ENCODE measurements at regions of chr9 and their contacts with region 1.

Region 1: DNA sequence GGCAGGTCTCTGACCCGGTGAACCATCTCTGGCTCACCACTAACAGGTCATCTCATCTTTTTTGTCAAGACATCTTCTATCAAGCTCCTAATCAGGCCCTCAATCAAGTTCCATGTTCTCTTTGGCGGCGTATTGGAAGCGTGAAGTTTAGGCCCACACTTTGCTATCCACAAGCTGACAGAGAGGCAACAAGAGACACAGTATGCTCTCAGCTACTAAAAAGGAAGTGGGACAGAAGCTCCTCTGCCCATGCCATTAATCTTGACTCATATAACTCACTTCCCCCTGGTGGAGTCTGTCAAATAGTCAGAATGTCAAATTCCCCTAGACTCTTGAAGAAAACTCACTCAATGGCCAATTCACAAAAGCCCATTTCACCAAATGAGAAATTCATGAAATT is 77.6 kb upstream of the TMC1 start:
- H3K4me3 Mint-ChIP-seq: no peak overlapping the region
- H3K27ac Mint-ChIP-seq: peak overlapping the region; percentile 61
- H3K4me1 Mint-ChIP-seq: peaks cover 69% of the 10 kb centered on the region
- H3K27me3 Mint-ChIP-seq: no peaks in the 10 kb centered on the region

Region 2: DNA sequence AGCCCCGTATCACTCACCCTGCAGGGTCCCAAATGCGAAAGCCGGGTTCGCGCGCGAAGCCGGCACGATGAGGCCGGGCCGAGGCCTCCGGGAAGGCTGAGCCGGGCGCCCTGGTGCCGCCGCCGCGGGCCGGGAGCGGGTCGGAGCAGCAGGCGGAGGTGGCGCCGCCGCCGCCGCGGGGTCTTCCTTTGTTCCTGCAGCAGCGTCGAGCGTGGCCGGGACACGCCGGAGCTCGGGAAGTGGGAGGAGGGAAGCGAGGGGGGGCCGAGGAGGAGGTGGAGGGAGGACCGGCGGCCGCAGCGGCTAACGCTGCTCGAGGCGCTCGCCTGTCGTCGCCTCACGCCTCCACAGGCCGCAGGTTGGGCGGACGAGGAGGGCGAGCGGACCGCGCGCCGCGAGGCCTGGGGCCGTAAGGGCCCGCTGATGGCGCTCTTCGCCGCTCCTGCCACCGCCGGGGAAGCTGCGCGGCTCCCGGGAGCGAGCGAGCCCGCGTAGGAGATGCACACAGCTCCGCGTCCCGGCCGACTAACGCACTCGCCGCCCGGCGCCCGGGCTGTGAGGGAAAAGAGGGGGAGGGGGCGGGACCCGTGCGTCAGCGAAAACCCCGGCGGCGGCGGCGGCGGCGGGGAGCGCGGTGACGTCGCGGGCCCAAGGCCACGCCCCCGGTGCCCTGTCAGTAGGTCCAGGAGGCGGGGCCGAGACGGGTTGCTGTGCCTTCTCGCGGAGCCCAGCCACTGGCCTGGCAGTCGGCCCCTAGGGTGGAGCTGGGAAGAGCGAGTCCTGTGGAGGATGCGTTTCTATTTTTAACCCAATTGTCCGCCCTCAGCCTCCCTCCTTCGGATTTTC is 79.0 kb before region 1 on chr9 and contains the start of gene ZFAND5:
- intact Hi-C with region 1: loop called (anchors 2 kb)
- H3K4me3 Mint-ChIP-seq: peak within 1 kb of the TSS; percentile 76
- H3K27ac Mint-ChIP-seq: peak within 1 kb of the TSS; percentile 97
- H3K4me1 Mint-ChIP-seq: peaks cover 16% of the 10 kb centered on the region
- H3K27me3 Mint-ChIP-seq: no peaks in the 10 kb centered on the region

Region 3: DNA sequence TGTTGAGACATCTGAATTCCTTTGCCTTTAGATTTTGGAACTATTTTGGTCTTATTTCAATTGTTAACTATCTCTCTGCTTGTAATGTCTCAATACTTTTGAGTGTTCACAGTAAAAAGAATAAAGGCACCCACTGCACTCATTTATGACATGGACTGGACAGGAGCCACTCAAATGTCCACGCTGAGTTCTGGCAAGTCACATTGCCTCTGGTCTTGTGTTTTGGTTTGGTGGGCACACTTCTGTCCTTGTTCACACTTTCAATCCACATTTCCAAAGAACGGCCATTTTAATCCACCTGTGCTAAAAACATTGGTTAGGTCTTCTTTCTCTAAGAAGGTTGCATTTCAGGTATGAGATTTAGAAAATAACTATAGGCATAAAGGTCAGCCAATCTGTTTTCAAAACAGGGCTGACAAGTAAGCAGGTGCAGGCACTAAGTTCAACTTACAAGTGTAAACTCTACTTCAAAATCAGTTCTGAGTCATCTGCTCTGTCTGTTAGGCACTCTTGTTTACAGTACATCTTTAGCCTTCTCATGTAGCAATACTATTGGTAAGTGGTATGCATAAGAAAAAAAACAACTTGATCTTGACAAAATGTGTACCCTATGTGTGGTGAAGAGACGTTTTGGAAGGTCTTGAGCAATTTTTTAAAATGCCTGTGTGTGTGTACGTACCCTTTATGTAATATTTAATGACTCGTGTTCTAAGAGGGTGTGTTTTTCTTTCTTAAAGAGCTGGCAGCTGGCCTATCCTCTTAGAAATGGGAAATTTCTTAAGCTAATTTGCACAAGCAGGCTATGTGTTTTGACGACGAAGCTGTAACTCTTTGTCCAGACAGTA is 47.4 kb before region 1 on chr9:
- intact Hi-C with region 1: no loop called
- H3K4me3 Mint-ChIP-seq: no peak overlapping the region
- H3K27ac Mint-ChIP-seq: no peak overlapping the region
- H3K4me1 Mint-ChIP-seq: peaks cover 18% of the 10 kb centered on the region
- H3K27me3 Mint-ChIP-seq: no peaks in the 10 kb centered on the region

Region 4: GRCh38 chr9:72476617-72477375 is 32.9 kb after region 1 on chr9:
- intact Hi-C with region 1: loop called (anchors 5 kb)
- H3K4me3 Mint-ChIP-seq: no peak overlapping the region
- H3K27ac Mint-ChIP-seq: peak overlapping the region; percentile 75
- H3K4me1 Mint-ChIP-seq: peaks cover 30% of the 10 kb centered on the region
- H3K27me3 Mint-ChIP-seq: no peaks in the 10 kb centered on the region

Region 5: GRCh38 chr9:72540348-72540873 is 96.6 kb after region 1 on chr9:
- intact Hi-C with region 1: loop called (anchors 5 kb)
- H3K4me3 Mint-ChIP-seq: peak overlapping the region; percentile 21
- H3K27ac Mint-ChIP-seq: peak overlapping the region; percentile 81
- H3K4me1 Mint-ChIP-seq: peaks cover 48% of the 10 kb centered on the region
- H3K27me3 Mint-ChIP-seq: no peaks in the 10 kb centered on the region